GM13977 (cell line): ENCODE measurements at regions of chr1 and their contacts with region 1.

Region 1: GRCh38 chr1:7207875-7208646 is 422.8 kb downstream of the CAMTA1 start:
- DNase-seq: peak; percentile 52
- CTCF ChIP-seq: peak; percentile 67

Region 2: GRCh38 chr1:6489799-6490180 is 718.3 kb before region 1 on chr1:
- in situ Hi-C with region 1: loop called (anchors 25 kb)
- DNase-seq: peak; percentile 94
- CTCF ChIP-seq: peak; percentile 98

Region 3: GRCh38 chr1:6701437-6702153 is 506.5 kb before region 1 on chr1 and contains the start of gene DNAJC11:
- in situ Hi-C with region 1: loop called (anchors 25 kb)
- DNase-seq: peak; percentile 97
- CTCF ChIP-seq: peak; percentile 100